Activated CD4-positive, alpha-beta T cell treated with anti-CD3 and anti-CD28 coated beads for 36 hours (primary cell): ENCODE measurements at regions of chr16 and their contacts with region 1.

Region 1: GRCh38 chr16:78794581-78795250 is 695.3 kb downstream of the WWOX start:
- DNase-seq: peak; percentile 24
- ATAC-seq: peak; percentile 24
- H3K4me3 Mint-ChIP-seq: no peak overlapping the region
- H3K27ac Mint-ChIP-seq: peak overlapping the region; percentile 27
- H3K4me1 Mint-ChIP-seq: peaks cover 30% of the 10 kb centered on the region
- H3K27me3 Mint-ChIP-seq: no peaks in the 10 kb centered on the region

Region 2: GRCh38 chr16:78813661-78814311 is 19.1 kb after region 1 on chr16:
- CTCF ChIA-PET with region 1: no interaction called
- POLR2A ChIA-PET with region 1: no interaction called
- intact Hi-C with region 1: no loop called
- DNase-seq: no peak
- ATAC-seq: no peak
- H3K4me3 Mint-ChIP-seq: no peak overlapping the region
- H3K27ac Mint-ChIP-seq: no peak overlapping the region
- H3K4me1 Mint-ChIP-seq: no peaks in the 10 kb centered on the region
- H3K27me3 Mint-ChIP-seq: no peaks in the 10 kb centered on the region

Region 3: DNA sequence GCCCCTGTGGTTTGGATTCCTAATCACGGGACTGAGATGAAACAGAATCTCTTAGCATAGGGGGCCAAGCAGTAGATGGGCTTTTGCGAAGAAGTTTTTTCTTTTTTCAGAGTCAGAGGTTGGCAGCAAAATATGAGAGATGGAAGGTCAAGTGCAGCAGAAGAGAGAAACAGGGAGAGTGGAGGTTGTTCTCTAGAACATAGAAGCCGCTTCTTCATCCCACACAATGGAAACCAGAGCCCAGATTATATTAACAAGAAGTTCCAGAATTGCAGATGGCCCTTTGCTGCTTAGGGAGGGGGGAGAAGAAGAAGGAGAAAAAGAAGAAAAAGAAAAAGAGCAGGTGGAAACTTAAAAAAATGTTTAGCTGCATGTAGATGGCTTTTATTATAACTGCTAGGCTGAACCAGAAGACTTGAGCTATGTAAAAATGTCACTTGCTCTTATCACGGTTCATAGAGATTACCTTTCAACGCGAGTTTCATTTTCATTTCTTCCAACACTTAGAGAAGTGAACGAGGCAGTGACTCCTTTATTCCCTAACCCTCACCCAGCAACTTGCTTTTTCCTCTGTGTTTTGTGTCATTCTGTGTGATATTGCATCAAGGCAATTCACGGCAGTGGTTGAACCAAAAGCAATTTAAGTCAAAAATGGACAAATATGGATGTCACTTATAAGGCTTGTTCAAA is 42.2 kb after region 1 on chr16:
- CTCF ChIA-PET with region 1: no interaction called
- POLR2A ChIA-PET with region 1: no interaction called
- intact Hi-C with region 1: loop called in 1 of 2 experiments (anchors 1 kb)
- DNase-seq: peak; percentile 8
- ATAC-seq: peak; percentile 87
- H3K4me3 Mint-ChIP-seq: peak overlapping the region; percentile 41
- H3K27ac Mint-ChIP-seq: peak overlapping the region; percentile 78
- H3K4me1 Mint-ChIP-seq: peaks cover 11% of the 10 kb centered on the region
- H3K27me3 Mint-ChIP-seq: no peaks in the 10 kb centered on the region

Region 4: DNA sequence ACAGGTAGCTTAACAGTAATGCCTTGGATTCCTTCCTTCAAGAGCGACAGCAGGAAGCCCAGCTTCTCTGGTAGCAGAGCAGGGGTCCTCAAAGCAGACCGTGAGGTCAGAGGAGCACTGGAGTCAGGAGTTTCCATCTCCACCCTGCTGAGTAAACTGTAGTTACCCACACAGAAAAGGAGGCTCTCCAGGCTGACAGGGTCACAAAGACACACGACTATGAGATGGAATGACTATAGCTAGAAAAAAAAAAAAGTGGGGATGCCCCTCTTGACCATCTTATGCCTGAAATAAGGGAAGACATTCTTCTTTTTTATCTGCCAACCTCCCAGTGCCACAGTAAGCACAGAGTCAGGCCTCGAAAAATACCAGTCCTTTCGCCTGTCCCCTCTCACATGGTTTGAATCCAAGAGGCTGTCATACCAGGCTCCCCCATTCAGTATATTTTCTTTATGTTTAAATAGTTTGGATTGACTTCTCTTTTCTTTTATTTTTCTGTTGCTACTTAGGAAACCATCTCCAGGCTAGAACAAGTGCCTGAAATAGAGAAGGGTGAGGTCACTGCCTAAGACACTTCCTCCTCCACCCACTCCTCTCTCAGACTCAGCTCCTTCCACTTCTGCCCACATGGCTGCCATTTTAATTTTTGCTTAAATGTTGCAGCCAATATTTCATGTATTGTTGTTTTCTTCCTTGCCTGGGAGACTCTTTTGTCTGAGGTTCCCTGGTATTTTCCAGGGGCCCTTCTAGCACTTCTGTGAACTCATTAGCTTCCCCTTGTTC is 98.4 kb after region 1 on chr16:
- CTCF ChIA-PET with region 1: no interaction called
- POLR2A ChIA-PET with region 1: no interaction called
- intact Hi-C with region 1: loop called in 1 of 2 experiments (anchors 2 kb)
- DNase-seq: peak; percentile 39
- ATAC-seq: peak; percentile 65
- H3K4me3 Mint-ChIP-seq: no peak overlapping the region
- H3K27ac Mint-ChIP-seq: peak overlapping the region; percentile 80
- H3K4me1 Mint-ChIP-seq: peaks cover 61% of the 10 kb centered on the region
- H3K27me3 Mint-ChIP-seq: no peaks in the 10 kb centered on the region